ENCODE measurements at regions of chr1 and their contacts with region 1.

Region 1: GRCh38 chr1:212284744-212285684 is at the start of gene PPP2R5A:
- DNase-seq: peak; percentile 97 to 100 (median 99)
- H3K4me3 ChIP-seq: peak within 1 kb of the TSS; percentile 67 to 100 (median 93)
- H3K27ac ChIP-seq: peak within 1 kb of the TSS; percentile 86 to 100 (median 98)
- H3K27me3 ChIP-seq: no peaks in the 10 kb centered on the region
- CTCF ChIP-seq: peak in 46 of 56 donors; percentile 3 to 61 (median 28)
- total RNA-seq, gene PPP2R5A: 20.1 to 45.5 (median 29.2) TPM

Region 2: DNA sequence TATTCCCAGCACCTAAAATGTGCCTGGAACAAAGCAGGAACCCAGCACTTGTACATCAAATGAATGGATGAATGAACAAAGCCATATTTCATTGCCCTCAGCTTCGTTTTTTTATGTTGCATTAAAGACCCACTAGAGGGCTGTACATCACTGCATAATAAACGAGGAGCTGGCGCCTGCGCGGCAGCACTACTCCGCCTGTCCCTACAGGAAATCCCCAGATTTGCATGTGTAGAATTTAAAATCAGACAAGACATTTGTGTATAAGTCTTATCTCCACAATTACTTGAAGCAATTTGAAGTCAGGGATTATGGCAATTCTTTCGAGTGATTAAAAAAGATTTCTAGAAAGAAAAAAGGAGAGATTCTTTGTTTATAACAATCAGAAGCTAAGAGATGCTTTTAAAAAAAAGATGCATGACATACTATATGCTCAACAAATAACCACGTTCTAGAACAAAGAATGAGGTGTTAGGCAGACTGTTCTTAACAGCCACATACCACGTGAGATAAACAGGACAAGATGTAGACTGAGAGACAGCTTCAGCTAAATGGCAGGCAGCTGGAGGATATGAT is 604.2 kb before region 1 on chr1:
- intact Hi-C with region 1: loop called in 1 of 2 experiments (anchors 10 kb)
- DNase-seq: peak; percentile 57 to 85 (median 80)
- H3K4me3 ChIP-seq: peak overlapping the region in 4 of 59 donors; percentile 2 to 20 (median 15)
- H3K27ac ChIP-seq: peak overlapping the region in 38 of 59 donors; percentile 1 to 85 (median 48)
- H3K27me3 ChIP-seq: no peaks in the 10 kb centered on the region
- CTCF ChIP-seq: peak; percentile 67 to 95 (median 85)

Region 3: GRCh38 chr1:211965108-211965805 is 319.8 kb before region 1 on chr1:
- intact Hi-C with region 1: no loop called
- DNase-seq: no peak
- H3K4me3 ChIP-seq: no peak overlapping the region
- H3K27ac ChIP-seq: no peak overlapping the region
- H3K27me3 ChIP-seq: no peaks in the 10 kb centered on the region
- CTCF ChIP-seq: no peak

Region 4: DNA sequence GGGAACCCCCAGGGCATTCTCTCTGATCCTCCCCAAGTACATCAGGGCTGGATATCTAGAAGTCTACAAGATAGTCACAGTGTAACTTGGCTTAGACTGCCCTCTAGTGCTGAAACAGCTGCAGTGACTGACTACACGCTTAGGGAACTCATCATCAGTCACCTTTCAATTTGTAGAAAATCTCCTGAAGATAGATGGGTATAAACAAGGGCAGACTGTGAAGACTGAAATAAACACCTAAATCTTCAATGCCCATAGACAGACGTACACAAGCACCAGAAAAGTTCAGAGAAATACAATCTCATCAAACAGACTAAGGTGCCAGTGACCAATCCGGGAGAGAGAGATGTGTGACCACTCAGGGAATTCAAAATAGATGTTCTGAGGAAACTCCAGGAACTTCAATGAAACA is 83.1 kb after region 1 on chr1:
- intact Hi-C with region 1: loop called in 1 of 2 experiments (anchors 5 kb)
- DNase-seq: peak in 2 of 10 donors; percentile 43 to 61
- H3K4me3 ChIP-seq: no peak overlapping the region
- H3K27ac ChIP-seq: peak overlapping the region in 5 of 59 donors; percentile 0 to 45 (median 32)
- H3K27me3 ChIP-seq: no peaks in the 10 kb centered on the region
- CTCF ChIP-seq: peak; percentile 25 to 83 (median 68)

Region 5: DNA sequence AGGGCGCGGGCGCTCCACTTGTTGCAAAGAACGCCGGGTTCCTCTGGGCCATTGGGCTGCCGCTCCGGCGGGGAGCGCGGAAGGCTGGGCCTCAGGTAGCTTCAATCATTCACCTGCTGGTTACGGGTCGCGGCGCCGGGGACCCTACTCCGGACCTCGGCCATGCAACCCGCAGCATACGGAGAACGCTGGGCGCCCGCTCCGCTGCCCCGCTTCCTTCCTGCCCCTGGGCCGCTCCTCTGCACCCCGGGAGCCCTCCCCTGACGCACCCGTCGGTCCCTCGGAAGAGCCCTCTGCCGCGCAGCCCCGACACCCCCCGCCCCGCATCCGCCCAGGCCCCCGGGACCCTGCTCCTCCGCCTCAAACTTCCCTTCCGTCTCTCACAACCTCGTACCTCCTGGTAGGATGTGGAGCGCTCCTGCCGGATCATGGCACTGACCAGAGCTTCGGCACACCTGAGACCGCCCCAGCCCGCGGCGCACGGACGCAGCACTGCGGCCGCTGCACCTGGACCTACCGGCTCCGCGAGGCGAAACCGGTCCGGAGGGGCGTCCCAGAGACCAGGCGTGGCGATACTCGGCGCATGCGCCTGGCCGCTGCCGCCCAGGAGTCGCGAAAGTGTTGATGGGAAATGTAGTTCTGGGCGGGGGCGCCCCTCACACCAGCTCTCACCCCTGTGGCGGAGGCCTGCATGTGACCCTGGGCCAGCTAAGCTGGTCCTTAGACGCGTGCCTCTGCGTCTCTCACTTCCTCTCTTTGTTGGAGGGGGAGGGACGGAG is 129.5 kb after region 1 on chr1 and contains the start of gene PACC1:
- intact Hi-C with region 1: loop called (anchors 2 to 5 kb)
- DNase-seq: peak; percentile 84 to 95 (median 87)
- H3K4me3 ChIP-seq: peak within 1 kb of the TSS; percentile 64 to 98 (median 89)
- H3K27ac ChIP-seq: peak within 1 kb of the TSS; percentile 76 to 99 (median 95)
- H3K27me3 ChIP-seq: no peaks in the 10 kb centered on the region
- CTCF ChIP-seq: peak in 38 of 56 donors; percentile 6 to 65 (median 28)
- total RNA-seq, gene PACC1: 6.9 to 82.7 (median 24.1) TPM

Region 6: DNA sequence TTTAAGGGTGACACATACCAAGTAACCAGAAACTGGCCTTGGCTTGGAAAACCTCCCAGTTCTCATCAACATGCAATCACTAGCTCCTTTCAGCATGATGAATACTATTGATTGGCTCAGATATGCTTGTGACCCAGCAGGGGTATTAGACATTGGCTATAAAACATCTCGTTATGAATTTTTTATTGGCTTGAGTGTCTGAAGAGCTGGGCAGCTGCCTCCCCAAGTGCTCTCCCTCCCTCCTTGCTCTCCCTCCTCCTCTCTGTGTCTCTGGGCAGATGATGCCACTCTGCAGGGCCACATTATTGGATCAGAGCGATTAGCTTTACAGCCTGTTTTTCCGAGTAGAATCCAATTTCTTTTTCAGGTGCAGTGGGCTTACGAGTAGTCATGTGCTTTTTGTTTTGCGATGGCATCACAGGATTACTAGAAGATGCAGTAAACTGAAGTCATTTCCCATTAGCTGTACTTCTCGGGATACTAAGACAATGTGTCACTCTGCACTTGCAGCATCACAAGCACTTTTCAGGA is 244.3 kb after region 1 on chr1:
- intact Hi-C with region 1: no loop called
- DNase-seq: no peak
- H3K4me3 ChIP-seq: peak overlapping the region in 26 of 59 donors; percentile 3 to 46 (median 16)
- H3K27ac ChIP-seq: peak overlapping the region in 49 of 59 donors; percentile 4 to 85 (median 53)
- H3K27me3 ChIP-seq: no peaks in the 10 kb centered on the region
- CTCF ChIP-seq: no peak